Left ventricle myocardium inferior (tissue), 1 donor: ENCODE measurements at regions of chr3 and their contacts with region 1.

Region 1: DNA sequence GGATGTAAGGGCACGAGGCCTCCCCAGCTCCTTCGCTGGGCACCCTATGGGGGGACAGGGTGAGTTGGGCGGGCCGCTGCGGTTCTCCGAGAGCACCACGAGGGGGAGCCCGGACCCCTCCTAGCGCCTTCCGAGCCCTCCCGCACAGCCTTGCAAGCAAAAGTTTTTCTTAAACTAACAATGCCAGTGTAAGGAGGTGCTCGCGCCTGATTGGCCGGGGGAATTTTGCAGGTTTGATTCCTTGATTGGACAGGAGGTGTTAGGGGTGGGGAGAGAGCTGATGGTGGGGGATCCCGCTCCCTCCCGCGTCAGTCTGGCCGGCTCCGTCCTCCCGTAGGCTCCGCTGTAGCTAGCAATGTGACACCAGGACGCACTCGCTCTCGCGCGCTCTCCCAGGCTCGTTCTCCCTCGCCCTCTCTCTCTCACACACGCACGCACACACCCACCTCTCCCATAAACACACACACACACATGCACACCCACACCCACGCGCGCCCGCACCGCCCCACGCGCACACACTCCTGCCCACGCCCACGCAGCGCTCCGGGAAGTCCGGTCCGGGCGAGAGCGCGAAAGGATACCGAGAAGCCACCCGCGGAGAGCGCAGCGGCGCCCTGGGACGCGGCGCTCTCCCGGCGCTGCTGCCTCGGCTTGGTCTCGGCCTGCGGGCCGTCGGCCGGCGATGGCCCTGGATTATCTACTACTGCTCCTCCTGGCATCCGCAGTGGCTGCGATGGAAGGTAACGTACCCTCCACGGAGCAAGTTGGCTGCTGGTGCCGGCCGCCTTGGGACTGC is at the start of gene EPHB1:
- DNase-seq: peak; percentile 77
- H3K4me3 ChIP-seq: peak within 1 kb of the TSS; percentile 74
- H3K27ac ChIP-seq: peak within 1 kb of the TSS; percentile 30
- H3K4me1 ChIP-seq: peaks cover 25% of the 10 kb centered on the region
- H3K27me3 ChIP-seq: peaks cover 52% of the 10 kb centered on the region
- CTCF ChIP-seq: peak; percentile 94
- total RNA-seq, gene EPHB1: 1.3 TPM

Region 2: GRCh38 chr3:135503760-135504686 is 708.9 kb after region 1 on chr3:
- intact Hi-C with region 1: loop called (anchors 10 kb)
- DNase-seq: peak; percentile 42
- H3K4me3 ChIP-seq: no peak overlapping the region
- H3K27ac ChIP-seq: no peak overlapping the region
- H3K4me1 ChIP-seq: peaks cover 5% of the 10 kb centered on the region
- H3K27me3 ChIP-seq: peaks cover 82% of the 10 kb centered on the region
- CTCF ChIP-seq: peak; percentile 73

Region 3: GRCh38 chr3:135895106-135895733 is 1100.1 kb after region 1 on chr3:
- intact Hi-C with region 1: loop called (anchors 10 kb)
- DNase-seq: peak; percentile 57
- H3K4me3 ChIP-seq: no peak overlapping the region
- H3K27ac ChIP-seq: no peak overlapping the region
- H3K4me1 ChIP-seq: no peaks in the 10 kb centered on the region
- H3K27me3 ChIP-seq: no peaks in the 10 kb centered on the region
- CTCF ChIP-seq: peak; percentile 82